ENCODE measurements at regions of chr3 and their contacts with region 1.

Region 1: GRCh38 chr3:81242871-81243270 is 518.6 kb downstream of the GBE1 start:
- DNase-seq: peak; percentile 70
- ATAC-seq: peak; percentile 65
- H3K4me3 ChIP-seq: no peak overlapping the region
- H3K27ac ChIP-seq: no peak overlapping the region
- H3K4me1 ChIP-seq: no peaks in the 10 kb centered on the region
- H3K27me3 ChIP-seq: no peaks in the 10 kb centered on the region
- CTCF ChIP-seq: peak; percentile 82

Region 2: DNA sequence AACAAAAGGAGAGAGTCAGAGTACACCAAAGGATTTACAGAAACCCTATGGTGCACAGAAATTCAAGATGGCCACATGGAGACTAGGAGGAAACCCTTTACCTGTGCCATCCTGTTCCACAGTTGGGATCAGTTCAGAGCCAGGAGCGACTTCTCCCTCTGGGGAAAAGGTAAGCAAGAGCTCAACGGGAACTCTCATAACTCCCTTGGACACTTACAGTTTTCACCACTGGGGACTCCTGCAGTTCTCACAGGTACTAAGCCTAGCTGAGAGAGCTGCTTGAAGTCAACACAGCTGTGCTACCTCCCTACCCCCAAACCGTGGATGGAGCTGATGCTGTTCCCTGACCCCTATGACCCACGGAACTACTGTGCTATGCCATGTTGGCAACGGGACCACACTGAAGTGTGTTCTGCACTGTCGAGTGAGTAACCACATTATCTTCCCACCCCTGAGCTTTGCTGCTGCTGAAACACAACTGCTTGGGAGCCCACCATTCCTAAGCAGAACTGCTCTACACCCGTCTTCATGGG is 88.2 kb before region 1 on chr3:
- CTCF ChIA-PET with region 1: no interaction called
- POLR2A ChIA-PET with region 1: interaction called, 16 read pairs
- intact Hi-C with region 1: no loop called
- DNase-seq: peak; percentile 15
- ATAC-seq: peak; percentile 42; the same call in 1 of the 2 replicates
- H3K4me3 ChIP-seq: no peak overlapping the region
- H3K27ac ChIP-seq: no peak overlapping the region
- H3K4me1 ChIP-seq: no peaks in the 10 kb centered on the region
- H3K27me3 ChIP-seq: no peaks in the 10 kb centered on the region
- CTCF ChIP-seq: no peak

Region 3: GRCh38 chr3:81289676-81290075 is 46.8 kb after region 1 on chr3:
- CTCF ChIA-PET with region 1: no interaction called
- POLR2A ChIA-PET with region 1: no interaction called
- intact Hi-C with region 1: no loop called
- DNase-seq: no peak
- ATAC-seq: no peak
- H3K4me3 ChIP-seq: no peak overlapping the region
- H3K27ac ChIP-seq: no peak overlapping the region
- H3K4me1 ChIP-seq: no peaks in the 10 kb centered on the region
- H3K27me3 ChIP-seq: no peaks in the 10 kb centered on the region
- CTCF ChIP-seq: no peak

Region 4: GRCh38 chr3:81338676-81339555 is 96.0 kb after region 1 on chr3:
- CTCF ChIA-PET with region 1: no interaction called
- POLR2A ChIA-PET with region 1: no interaction called
- intact Hi-C with region 1: loop called (anchors 10 kb)
- DNase-seq: peak; percentile 88
- ATAC-seq: peak; percentile 85
- H3K4me3 ChIP-seq: peak overlapping the region; percentile 8; the same call in 1 of the 2 replicates
- H3K27ac ChIP-seq: peak overlapping the region; percentile 3
- H3K4me1 ChIP-seq: peaks cover 24% of the 10 kb centered on the region
- H3K27me3 ChIP-seq: no peaks in the 10 kb centered on the region
- CTCF ChIP-seq: peak; percentile 92

Region 5: GRCh38 chr3:81502236-81502635 is 259.4 kb after region 1 on chr3:
- CTCF ChIA-PET with region 1: no interaction called
- POLR2A ChIA-PET with region 1: no interaction called
- intact Hi-C with region 1: no loop called
- DNase-seq: no peak
- ATAC-seq: no peak
- H3K4me3 ChIP-seq: no peak overlapping the region
- H3K27ac ChIP-seq: no peak overlapping the region
- H3K4me1 ChIP-seq: no peaks in the 10 kb centered on the region
- H3K27me3 ChIP-seq: no peaks in the 10 kb centered on the region
- CTCF ChIP-seq: no peak

Measured in PC-3 (cell line).